Head of caudate nucleus (tissue), 42 donors: ENCODE measurements at regions of chr7 and their contacts with region 1.

Region 1: GRCh38 chr7:75738987-75739795 is 450 bp upstream of the HIP1 start:
- DNase-seq: peak; percentile 100

Region 2: DNA sequence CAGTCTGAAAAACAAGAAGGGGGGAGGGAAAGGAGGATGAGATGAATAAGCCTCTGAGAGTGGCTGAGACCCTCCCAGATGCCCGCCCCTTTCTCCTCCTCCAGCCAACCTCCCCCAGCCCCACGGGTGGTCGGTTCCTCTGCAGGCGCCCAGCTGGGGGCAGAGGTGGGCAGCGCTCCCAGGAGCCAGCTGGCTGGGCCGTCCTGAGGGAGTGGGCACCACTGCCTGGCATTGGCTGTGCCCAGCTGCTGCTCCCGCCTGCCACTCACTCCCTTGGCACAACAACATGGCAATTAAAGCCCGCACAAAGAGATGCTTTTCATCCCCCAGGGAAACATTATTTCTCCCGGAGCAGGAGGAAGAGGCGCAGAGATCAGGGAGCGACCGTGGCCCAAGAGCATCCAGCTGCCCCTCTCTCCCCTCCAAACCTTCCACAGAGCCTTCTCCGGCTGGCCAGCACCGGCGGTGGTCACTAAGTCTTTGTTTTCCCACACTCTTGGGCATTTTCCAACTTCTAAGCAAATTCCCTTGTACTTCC is 139.9 kb before region 1 on chr7:
- intact Hi-C with region 1: loop called (anchors 5 kb)
- DNase-seq: peak; percentile 87 to 99 (median 95)

Region 3: DNA sequence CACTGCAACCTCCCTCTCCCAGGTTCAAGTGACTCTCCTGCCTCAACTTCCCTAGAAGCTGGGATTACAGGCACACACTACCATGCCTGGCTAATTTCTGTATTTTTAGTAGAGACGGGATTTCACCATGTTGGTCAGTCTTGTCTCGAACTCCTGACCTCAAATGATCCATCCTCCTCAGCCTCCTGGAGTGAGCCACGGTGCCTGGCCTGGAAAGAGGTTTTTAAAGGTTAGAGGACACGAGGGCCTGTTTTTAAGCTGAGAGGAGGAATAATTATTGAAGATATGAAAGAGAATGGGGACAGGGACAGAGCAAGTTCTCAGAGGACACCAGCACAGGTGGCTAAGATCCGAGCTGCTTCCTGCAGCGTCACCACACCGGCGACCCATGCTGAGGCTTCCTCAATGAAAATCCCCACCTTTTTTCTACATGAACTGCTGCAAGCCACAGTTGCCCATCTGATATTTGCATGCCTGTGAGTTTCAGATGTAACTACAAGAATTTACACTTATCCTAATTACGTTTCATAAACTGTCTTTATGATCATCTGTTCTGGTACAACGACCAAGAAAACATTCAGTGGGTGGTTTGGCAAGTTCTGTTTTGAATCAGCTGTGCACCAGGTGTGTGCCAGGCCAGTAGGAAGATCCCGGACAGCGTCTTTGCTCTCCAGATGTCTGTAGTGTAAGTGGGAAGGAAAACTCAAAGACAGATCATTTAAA is 76.5 kb before region 1 on chr7:
- intact Hi-C with region 1: no loop called
- DNase-seq: no peak